H1 (cell line): ENCODE measurements at regions of chr10 and their contacts with region 1.

Region 1: DNA sequence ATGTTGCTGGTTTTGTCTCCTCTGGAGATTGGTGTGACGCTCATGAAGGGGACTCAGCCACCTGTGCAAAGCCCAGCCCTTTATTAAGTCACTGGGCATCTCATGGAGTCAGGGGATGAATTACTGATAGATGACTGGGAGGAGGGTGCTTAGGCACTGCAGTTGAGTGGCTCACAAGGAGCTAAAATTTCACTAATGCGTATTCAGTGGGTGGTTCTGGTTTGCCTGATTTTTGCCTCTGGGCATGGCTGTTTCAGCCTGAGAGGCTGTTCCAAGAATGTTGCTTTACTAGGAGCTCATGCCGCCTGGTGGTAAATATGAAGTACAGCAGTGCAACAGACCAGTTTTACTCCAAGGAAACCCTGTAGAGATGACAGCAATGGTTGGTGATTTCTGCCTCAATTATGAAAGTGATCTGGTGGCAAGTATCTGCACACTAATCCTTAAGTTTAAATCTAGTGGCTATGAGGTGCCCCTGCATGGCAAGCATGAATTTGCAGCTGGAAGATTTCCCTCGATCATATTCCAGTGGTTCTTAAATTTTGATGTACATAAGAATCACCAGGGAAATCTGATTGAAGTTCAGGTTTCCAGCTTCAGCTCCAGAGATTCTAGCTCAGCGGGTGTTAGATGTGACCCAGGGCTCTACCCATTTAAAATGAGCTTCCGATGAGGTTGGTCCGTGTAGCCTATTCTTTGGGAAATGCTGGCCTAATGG is 19.9 kb downstream of the ACTA2 start:
- DNase-seq: peak in 1 of 2 experiments; percentile 52
- H3K4me3 ChIP-seq: no peak overlapping the region
- H3K27ac ChIP-seq: no peak overlapping the region
- H3K4me1 ChIP-seq: peaks cover 0 to 8% (median 3%) of the 10 kb centered on the region in 4 experiments; a peak in 3 of 7 replicates
- H3K27me3 ChIP-seq: no peaks in the 10 kb centered on the region
- CTCF ChIP-seq: peak in 2 of 3 experiments; percentile 90 to 92; a peak in 3 of 4 replicates
- EP300 ChIP-seq: peak in 1 of 2 experiments; percentile 28; a peak in 1 of 3 replicates
- POLR2A ChIP-seq: no peak
- RAD21 ChIP-seq: peak; percentile 86 to 90

Region 2: GRCh38 chr10:88728107-88728763 is 204.5 kb before region 1 on chr10:
- CTCF ChIA-PET with region 1: interaction called, 32 read pairs
- POLR2A ChIA-PET with region 1: no interaction called
- DNase-seq: peak; percentile 93 to 99
- H3K4me3 ChIP-seq: no peak overlapping the region
- H3K27ac ChIP-seq: no peak overlapping the region
- H3K4me1 ChIP-seq: peaks cover 0 to 6% (median 2%) of the 10 kb centered on the region in 4 experiments; a peak in 3 of 7 replicates
- H3K27me3 ChIP-seq: peaks cover 0 to 3% (median 0%) of the 10 kb centered on the region in 4 experiments; a peak in 2 of 7 replicates
- CTCF ChIP-seq: peak; percentile 99 to 100 (median 100)
- EP300 ChIP-seq: peak in 1 of 2 experiments; percentile 53; a peak in 1 of 3 replicates
- POLR2A ChIP-seq: no peak
- RAD21 ChIP-seq: peak; percentile 95

Region 3: DNA sequence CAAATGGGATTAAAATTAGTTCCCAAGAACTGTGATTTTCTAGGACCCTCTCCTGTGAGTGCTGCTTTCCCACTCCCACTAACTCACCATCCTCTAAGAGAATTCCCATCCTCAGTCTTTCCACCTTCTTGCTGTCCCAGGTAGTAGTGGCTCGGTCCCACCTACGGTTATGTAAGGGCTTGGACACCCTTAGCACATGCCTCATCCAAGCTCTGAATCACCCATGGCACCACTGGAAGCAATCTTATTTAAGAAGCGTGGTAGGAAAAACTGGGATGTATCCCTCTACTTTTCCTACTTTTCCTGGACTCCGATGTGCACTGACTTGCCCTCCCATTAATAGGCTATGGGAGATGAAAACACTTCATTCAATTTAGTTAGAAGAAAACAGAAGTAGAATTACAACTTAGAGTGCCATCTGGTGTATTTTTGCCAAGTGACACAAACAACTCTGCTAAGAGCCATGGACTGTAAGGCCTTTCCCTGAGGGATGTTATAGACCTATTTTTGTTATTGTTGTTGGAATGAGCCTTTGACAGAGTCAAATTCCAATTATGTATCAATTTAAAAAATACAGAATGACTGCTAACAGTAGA is 67.3 kb before region 1 on chr10:
- CTCF ChIA-PET with region 1: interaction called, 11 read pairs
- POLR2A ChIA-PET with region 1: no interaction called
- DNase-seq: no peak
- H3K4me3 ChIP-seq: no peak overlapping the region
- H3K27ac ChIP-seq: no peak overlapping the region
- H3K4me1 ChIP-seq: no peaks in the 10 kb centered on the region
- H3K27me3 ChIP-seq: no peaks in the 10 kb centered on the region
- CTCF ChIP-seq: peak in 1 of 3 experiments; percentile 16; a peak in 2 of 4 replicates
- EP300 ChIP-seq: no peak
- POLR2A ChIP-seq: no peak
- RAD21 ChIP-seq: peak; percentile 7 to 15; a peak in 1 of 4 replicates

Region 4: GRCh38 chr10:88901206-88901983 is 31.3 kb before region 1 on chr10:
- CTCF ChIA-PET with region 1: interaction called, 45 read pairs
- POLR2A ChIA-PET with region 1: no interaction called
- DNase-seq: no peak
- H3K4me3 ChIP-seq: no peak overlapping the region
- H3K27ac ChIP-seq: no peak overlapping the region
- H3K4me1 ChIP-seq: peaks cover 0 to 3% (median 0%) of the 10 kb centered on the region in 4 experiments; a peak in 2 of 7 replicates
- H3K27me3 ChIP-seq: no peaks in the 10 kb centered on the region
- CTCF ChIP-seq: no peak
- EP300 ChIP-seq: no peak
- POLR2A ChIP-seq: no peak
- RAD21 ChIP-seq: no peak

Region 5: GRCh38 chr10:88979153-88979562 is 46.5 kb after region 1 on chr10:
- CTCF ChIA-PET with region 1: interaction called, 12 read pairs
- POLR2A ChIA-PET with region 1: no interaction called
- DNase-seq: no peak
- H3K4me3 ChIP-seq: no peak overlapping the region
- H3K27ac ChIP-seq: no peak overlapping the region
- H3K4me1 ChIP-seq: no peaks in the 10 kb centered on the region
- H3K27me3 ChIP-seq: no peaks in the 10 kb centered on the region
- CTCF ChIP-seq: no peak
- EP300 ChIP-seq: no peak
- POLR2A ChIP-seq: no peak
- RAD21 ChIP-seq: no peak

Region 6: DNA sequence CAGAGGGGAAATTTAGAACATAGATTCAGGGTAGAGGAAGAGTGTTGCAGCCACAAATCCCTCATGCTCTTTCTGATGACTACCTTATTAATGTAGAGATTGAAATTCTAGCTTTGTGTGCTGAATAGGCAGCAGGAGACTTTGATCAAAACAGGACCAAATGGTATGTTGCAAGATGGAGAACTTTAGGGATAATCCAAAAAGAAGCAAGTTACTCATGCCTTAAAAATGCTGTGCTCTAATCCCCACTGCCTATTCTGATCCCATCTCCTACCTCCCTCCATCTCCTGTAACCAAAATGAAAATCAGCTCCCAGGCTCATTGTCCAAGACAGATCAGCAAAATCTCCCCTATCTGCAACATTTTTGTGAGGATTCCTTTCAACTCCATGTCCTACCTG is 243.1 kb after region 1 on chr10:
- CTCF ChIA-PET with region 1: interaction called, 10 read pairs
- POLR2A ChIA-PET with region 1: no interaction called
- DNase-seq: no peak
- H3K4me3 ChIP-seq: no peak overlapping the region
- H3K27ac ChIP-seq: no peak overlapping the region
- H3K4me1 ChIP-seq: peaks cover 0 to 6% (median 3%) of the 10 kb centered on the region in 4 experiments; a peak in 2 of 7 replicates
- H3K27me3 ChIP-seq: peaks cover 0 to 2% (median 0%) of the 10 kb centered on the region in 4 experiments; a peak in 1 of 7 replicates
- CTCF ChIP-seq: no peak
- EP300 ChIP-seq: no peak
- POLR2A ChIP-seq: no peak
- RAD21 ChIP-seq: no peak